Activated T-helper 1 cell treated with anti-CD3 and anti-CD28 coated beads, Interleukin-12 subunit alpha, Interleukin-12 subunit beta, Interleukin-2, Interleukin-4 antibody, amounts not matched to agents 30 ng/mL and 10 ng/mL and 1 ng/mL, durations not matched to agents 14 hours and 24 hours and 36 hours (primary cell): ENCODE measurements at regions of chr12 and their contacts with region 1.

Region 1: DNA sequence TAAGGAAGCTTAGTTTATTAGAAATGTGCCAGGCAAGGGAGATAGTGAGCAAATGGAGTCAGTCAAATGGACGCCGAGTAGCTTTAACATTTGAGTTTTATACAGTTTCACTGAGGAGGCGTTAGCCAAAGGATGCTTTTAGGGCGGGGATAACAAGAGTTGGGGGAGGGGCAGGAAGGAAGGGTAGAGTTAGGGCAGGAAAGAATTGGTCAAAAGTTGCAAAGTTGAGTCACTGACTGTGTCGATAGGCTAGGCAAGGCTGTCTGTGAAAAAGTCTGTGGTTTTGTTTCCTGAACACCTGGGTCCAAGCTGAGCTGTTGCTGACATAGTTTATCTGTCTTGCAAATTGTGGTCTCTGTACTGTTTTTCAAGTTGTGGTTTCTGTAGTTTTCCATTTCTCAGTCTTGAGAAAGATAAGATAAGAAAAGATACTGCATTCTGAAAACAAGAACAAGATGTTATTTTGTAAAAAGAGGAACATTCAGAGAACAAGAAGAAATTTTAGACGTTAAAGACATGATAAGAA is 62.6 kb upstream of the RESF1 start:
- DNase-seq: peak; percentile 88
- H3K4me3 Mint-ChIP-seq: peak overlapping the region; percentile 73
- H3K27ac Mint-ChIP-seq: peak overlapping the region; percentile 99
- H3K4me1 Mint-ChIP-seq: peaks cover 51% of the 10 kb centered on the region
- H3K27me3 Mint-ChIP-seq: no peaks in the 10 kb centered on the region

Region 2: GRCh38 chr12:31682136-31682962 is 214.2 kb before region 1 on chr12:
- intact Hi-C with region 1: loop called (anchors 1 kb)
- DNase-seq: peak; percentile 62
- H3K4me3 Mint-ChIP-seq: no peak overlapping the region
- H3K27ac Mint-ChIP-seq: peak overlapping the region; percentile 50
- H3K4me1 Mint-ChIP-seq: peaks cover 12% of the 10 kb centered on the region
- H3K27me3 Mint-ChIP-seq: no peaks in the 10 kb centered on the region

Region 3: GRCh38 chr12:31736472-31736871 is 160.1 kb before region 1 on chr12:
- intact Hi-C with region 1: loop called (anchors 1 kb)
- DNase-seq: peak; percentile 67
- H3K4me3 Mint-ChIP-seq: no peak overlapping the region
- H3K27ac Mint-ChIP-seq: peak overlapping the region; percentile 84
- H3K4me1 Mint-ChIP-seq: peaks cover 54% of the 10 kb centered on the region
- H3K27me3 Mint-ChIP-seq: no peaks in the 10 kb centered on the region

Region 4: GRCh38 chr12:31849090-31849687 is 47.4 kb before region 1 on chr12:
- intact Hi-C with region 1: loop called (anchors 5 kb)
- DNase-seq: no peak
- H3K4me3 Mint-ChIP-seq: no peak overlapping the region
- H3K27ac Mint-ChIP-seq: no peak overlapping the region
- H3K4me1 Mint-ChIP-seq: no peaks in the 10 kb centered on the region
- H3K27me3 Mint-ChIP-seq: no peaks in the 10 kb centered on the region

Region 5: GRCh38 chr12:31959161-31959700 is 62.7 kb after region 1 on chr12 and contains the start of gene RESF1:
- intact Hi-C with region 1: loop called (anchors 1 kb)
- DNase-seq: peak; percentile 87
- H3K4me3 Mint-ChIP-seq: peak within 1 kb of the TSS; percentile 92
- H3K27ac Mint-ChIP-seq: peak within 1 kb of the TSS; percentile 95
- H3K4me1 Mint-ChIP-seq: peaks cover 73% of the 10 kb centered on the region
- H3K27me3 Mint-ChIP-seq: no peaks in the 10 kb centered on the region
- total RNA-seq, gene RESF1: 63.0 and 66.2 TPM in 2 replicates

Region 6: DNA sequence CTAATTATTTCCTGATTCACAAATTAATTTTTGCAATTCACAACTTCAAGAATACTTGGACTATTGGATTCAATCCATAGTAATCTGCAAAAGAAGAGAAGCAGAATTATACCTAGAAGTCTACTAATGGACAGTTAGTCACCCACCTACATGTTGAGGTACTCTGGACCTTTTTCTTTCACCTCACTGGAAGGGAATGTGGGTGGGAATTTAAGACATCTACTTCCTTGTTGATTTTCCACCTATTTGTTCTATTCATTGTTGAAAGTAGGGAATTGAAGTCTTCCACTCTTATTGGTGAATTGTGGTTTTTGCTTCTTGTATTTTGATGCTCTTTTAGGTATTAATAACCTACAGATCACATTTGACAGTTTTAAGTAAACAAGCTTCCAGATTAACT is 73.6 kb after region 1 on chr12:
- intact Hi-C with region 1: no loop called
- DNase-seq: no peak
- H3K4me3 Mint-ChIP-seq: no peak overlapping the region
- H3K27ac Mint-ChIP-seq: no peak overlapping the region
- H3K4me1 Mint-ChIP-seq: peaks cover 28% of the 10 kb centered on the region
- H3K27me3 Mint-ChIP-seq: no peaks in the 10 kb centered on the region